CD4-positive, alpha-beta T cell (primary cell): ENCODE measurements at regions of chrX and their contacts with region 1.

Region 1: GRCh38 chrX:136909706-136910564 is 29.4 kb upstream of the RBMX start:
- DNase-seq: peak; percentile 20 to 82 (median 44)
- ATAC-seq: peak; percentile 63
- H3K4me3 ChIP-seq: peak overlapping the region; percentile 91
- H3K4me3 Mint-ChIP-seq: peak overlapping the region; percentile 99
- H3K27ac ChIP-seq: peak overlapping the region; percentile 78 to 85
- H3K27ac Mint-ChIP-seq: peak overlapping the region; percentile 83
- H3K4me1 ChIP-seq: peaks cover 10% of the 10 kb centered on the region
- H3K4me1 Mint-ChIP-seq: peaks cover 11% of the 10 kb centered on the region
- H3K27me3 ChIP-seq: no peaks in the 10 kb centered on the region
- H3K27me3 Mint-ChIP-seq: no peaks in the 10 kb centered on the region
- CTCF ChIP-seq: no peak

Region 2: GRCh38 chrX:136310418-136310817 is 599.5 kb before region 1 on chrX:
- CTCF ChIA-PET with region 1: no interaction called
- POLR2A ChIA-PET with region 1: no interaction called
- intact Hi-C with region 1: no loop called
- DNase-seq: no peak
- ATAC-seq: no peak
- H3K4me3 ChIP-seq: no peak overlapping the region
- H3K4me3 Mint-ChIP-seq: no peak overlapping the region
- H3K27ac ChIP-seq: no peak overlapping the region
- H3K27ac Mint-ChIP-seq: no peak overlapping the region
- H3K4me1 ChIP-seq: no peaks in the 10 kb centered on the region
- H3K4me1 Mint-ChIP-seq: no peaks in the 10 kb centered on the region
- H3K27me3 ChIP-seq: no peaks in the 10 kb centered on the region
- H3K27me3 Mint-ChIP-seq: no peaks in the 10 kb centered on the region
- CTCF ChIP-seq: no peak

Region 3: DNA sequence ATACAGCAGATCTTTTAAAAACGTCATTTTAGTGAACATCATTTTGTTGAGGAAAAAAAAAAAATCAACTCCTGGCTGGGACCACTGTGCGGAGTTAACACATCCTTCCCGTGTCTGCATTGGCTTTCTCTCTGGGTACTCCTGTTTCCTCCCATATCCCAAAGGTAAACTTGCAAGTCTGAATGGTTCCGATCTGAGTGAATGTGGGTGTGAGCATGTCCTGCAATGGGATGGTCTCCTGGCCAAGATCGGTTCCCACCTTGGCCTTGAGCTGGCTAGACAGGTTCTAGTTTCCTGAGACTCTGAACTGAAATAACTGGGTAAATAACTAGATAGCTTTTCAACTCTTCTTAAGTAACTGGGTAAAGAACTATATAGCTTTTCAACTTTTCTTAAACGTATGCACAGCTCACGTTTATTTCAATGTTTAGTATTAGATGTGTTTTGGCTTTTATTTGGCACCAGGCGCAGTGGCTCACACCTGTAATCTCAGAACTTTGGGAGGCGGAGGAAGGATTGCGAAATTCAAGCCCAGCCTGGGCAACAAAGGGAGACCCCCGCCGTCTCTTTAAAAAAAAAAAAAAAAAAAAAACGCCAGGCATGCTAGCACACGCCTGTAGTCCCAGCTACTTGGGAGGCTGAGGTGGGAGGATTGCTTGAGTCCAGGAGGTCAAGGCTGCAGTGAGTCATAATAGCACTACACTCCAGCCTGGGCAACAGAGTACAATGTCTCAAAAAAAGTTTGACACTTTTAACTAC is 43.4 kb before region 1 on chrX:
- CTCF ChIA-PET with region 1: no interaction called
- POLR2A ChIA-PET with region 1: no interaction called
- intact Hi-C with region 1: loop called in 1 of 2 experiments (anchors 10 kb)
- DNase-seq: no peak
- ATAC-seq: peak; percentile 14
- H3K4me3 ChIP-seq: no peak overlapping the region
- H3K4me3 Mint-ChIP-seq: peak overlapping the region; percentile 8
- H3K27ac ChIP-seq: no peak overlapping the region
- H3K27ac Mint-ChIP-seq: peak overlapping the region; percentile 66
- H3K4me1 ChIP-seq: peaks cover 4% of the 10 kb centered on the region
- H3K4me1 Mint-ChIP-seq: peaks cover 43% of the 10 kb centered on the region
- H3K27me3 ChIP-seq: no peaks in the 10 kb centered on the region
- H3K27me3 Mint-ChIP-seq: no peaks in the 10 kb centered on the region
- CTCF ChIP-seq: no peak

Region 4: DNA sequence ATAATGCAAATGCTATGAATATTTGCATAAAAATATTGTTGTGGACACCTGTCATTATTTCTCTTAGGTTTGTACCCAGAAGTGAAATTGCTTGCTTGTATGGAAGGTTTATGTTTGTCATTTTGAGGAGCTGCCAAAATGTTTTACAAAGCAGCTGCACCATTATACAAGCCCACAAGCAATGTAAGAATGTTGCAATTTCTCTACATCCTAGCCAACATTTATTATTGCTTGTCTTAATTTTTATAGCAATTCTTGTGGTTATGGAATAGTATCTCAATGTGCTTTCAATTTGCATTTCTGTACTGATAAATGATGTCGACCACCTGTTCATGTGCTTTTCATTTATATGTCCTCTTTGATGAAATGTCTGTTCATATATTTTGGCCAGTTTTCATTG is 10.7 kb before region 1 on chrX:
- CTCF ChIA-PET with region 1: no interaction called
- POLR2A ChIA-PET with region 1: no interaction called
- intact Hi-C with region 1: no loop called
- DNase-seq: no peak
- ATAC-seq: no peak
- H3K4me3 ChIP-seq: no peak overlapping the region
- H3K4me3 Mint-ChIP-seq: no peak overlapping the region
- H3K27ac ChIP-seq: no peak overlapping the region
- H3K27ac Mint-ChIP-seq: no peak overlapping the region
- H3K4me1 ChIP-seq: no peaks in the 10 kb centered on the region
- H3K4me1 Mint-ChIP-seq: no peaks in the 10 kb centered on the region
- H3K27me3 ChIP-seq: no peaks in the 10 kb centered on the region
- H3K27me3 Mint-ChIP-seq: no peaks in the 10 kb centered on the region
- CTCF ChIP-seq: no peak